ENCODE measurements at regions of chr17 and their contacts with region 1.

Region 1: GRCh38 chr17:58303971-58304725 is 23.4 kb upstream of the MPO start:
- DNase-seq: peak; percentile 66
- ATAC-seq: peak; percentile 99
- H3K4me3 Mint-ChIP-seq: no peak overlapping the region
- H3K27ac Mint-ChIP-seq: no peak overlapping the region
- H3K4me1 Mint-ChIP-seq: peaks cover 2% of the 10 kb centered on the region
- H3K27me3 Mint-ChIP-seq: no peaks in the 10 kb centered on the region
- CTCF ChIP-seq: peak; percentile 89

Region 2: GRCh38 chr17:58060596-58061191 is 243.5 kb before region 1 on chr17:
- CTCF ChIA-PET with region 1: no interaction called
- POLR2A ChIA-PET with region 1: no interaction called
- intact Hi-C with region 1: no loop called
- DNase-seq: no peak
- ATAC-seq: no peak
- H3K4me3 Mint-ChIP-seq: no peak overlapping the region
- H3K27ac Mint-ChIP-seq: no peak overlapping the region
- H3K4me1 Mint-ChIP-seq: no peaks in the 10 kb centered on the region
- H3K27me3 Mint-ChIP-seq: peaks cover 3% of the 10 kb centered on the region
- CTCF ChIP-seq: no peak

Region 3: DNA sequence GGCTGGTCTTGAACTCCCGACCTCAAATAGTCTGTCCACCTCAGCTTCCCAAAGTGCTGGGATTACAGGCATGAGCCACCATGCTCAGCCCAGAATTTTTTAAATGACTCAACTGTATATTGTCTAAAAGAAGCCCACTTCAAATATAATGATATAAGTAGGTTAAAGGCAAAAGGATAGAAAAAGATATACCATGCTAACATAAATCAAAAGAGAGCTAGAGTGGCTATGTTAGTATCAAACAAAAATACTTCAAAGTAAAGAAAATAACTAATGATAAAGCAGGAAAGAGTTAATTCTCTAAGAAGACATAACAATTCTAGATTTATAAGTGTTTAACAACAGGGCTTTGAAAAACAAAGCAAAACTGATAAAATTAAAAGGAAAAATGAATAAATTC is 10.1 kb before region 1 on chr17:
- CTCF ChIA-PET with region 1: interaction called, 15 read pairs
- POLR2A ChIA-PET with region 1: no interaction called
- intact Hi-C with region 1: no loop called
- DNase-seq: no peak
- ATAC-seq: no peak
- H3K4me3 Mint-ChIP-seq: no peak overlapping the region
- H3K27ac Mint-ChIP-seq: no peak overlapping the region
- H3K4me1 Mint-ChIP-seq: no peaks in the 10 kb centered on the region
- H3K27me3 Mint-ChIP-seq: peaks cover 5% of the 10 kb centered on the region
- CTCF ChIP-seq: no peak

Region 4: DNA sequence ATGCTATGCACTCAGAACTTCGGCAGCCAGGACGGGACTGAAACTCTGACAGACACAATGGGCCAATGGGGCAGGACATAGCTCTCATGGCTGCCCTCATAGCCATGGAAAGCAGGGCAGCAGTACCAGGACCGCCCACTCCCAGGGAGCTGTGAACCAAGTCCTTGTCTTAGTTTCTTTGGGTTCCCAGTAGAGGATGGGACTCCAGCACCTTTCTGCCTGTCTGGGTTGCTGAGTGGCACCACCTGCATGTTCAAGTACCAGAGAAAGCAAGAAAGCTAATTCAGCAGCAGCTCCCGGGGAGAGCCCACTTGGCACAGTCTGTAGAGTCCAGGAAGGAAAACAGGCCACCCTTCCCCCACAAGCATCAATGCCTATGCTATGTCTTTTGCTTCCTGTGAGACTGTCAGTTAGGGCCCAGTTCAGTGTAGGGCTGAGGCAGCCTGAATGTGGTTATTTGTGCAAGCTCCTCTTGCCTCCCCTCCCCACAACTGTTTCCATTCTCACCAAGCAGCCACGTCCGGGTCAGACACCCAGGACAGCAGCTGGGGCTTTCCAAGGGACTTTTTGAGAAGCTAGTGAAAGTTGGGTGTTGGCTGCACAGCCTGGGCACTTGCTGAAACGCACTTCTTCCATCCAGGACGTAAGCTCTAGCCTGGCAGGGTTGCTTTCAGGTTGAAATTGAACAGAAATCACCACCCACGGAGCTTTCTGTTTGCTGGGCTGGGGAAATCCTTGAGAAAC is 40.1 kb after region 1 on chr17:
- CTCF ChIA-PET with region 1: interaction called, 11 read pairs
- POLR2A ChIA-PET with region 1: interaction called, 7 read pairs
- intact Hi-C with region 1: no loop called
- DNase-seq: peak; percentile 98
- ATAC-seq: peak; percentile 78
- H3K4me3 Mint-ChIP-seq: peak overlapping the region; percentile 81
- H3K27ac Mint-ChIP-seq: peak overlapping the region; percentile 96
- H3K4me1 Mint-ChIP-seq: peaks cover 53% of the 10 kb centered on the region
- H3K27me3 Mint-ChIP-seq: no peaks in the 10 kb centered on the region
- CTCF ChIP-seq: no peak

Region 5: DNA sequence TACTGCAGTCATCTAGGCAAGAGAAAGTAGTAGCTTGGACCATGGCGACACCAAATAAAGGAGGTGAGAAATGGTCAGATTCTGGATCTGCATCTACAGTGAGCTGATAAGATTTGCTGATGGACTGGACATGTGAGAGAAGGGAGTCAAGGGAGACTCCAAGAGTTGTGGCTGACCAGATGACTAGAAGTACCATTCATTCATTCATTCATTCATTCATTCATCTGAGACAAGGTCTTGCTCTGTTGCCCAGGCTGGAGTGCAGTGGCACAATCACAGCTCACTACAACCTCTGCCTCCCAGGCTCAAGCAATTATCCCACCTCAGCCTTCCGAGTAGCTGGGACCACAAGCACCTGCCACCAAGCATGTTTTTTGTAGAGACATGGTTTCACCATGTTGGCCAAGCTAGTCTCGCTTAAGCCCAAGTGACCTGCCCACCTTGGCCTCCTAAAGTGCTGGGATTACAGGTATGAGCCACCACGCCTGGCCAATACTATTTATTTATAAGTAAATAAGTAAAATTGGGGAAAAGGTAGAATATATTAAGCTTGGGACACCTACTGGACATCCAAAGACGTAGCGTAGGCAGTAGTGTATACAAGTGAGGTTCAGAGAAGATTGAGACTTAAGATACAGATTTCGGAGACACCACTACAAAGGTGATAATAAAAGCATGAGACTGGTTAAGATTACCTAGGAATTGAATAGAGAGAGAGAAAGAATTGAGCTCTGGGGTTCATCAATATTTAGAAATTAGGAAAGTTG is 128.8 kb after region 1 on chr17:
- CTCF ChIA-PET with region 1: interaction called, 13 read pairs
- POLR2A ChIA-PET with region 1: no interaction called
- intact Hi-C with region 1: no loop called
- DNase-seq: no peak
- ATAC-seq: no peak
- H3K4me3 Mint-ChIP-seq: no peak overlapping the region
- H3K27ac Mint-ChIP-seq: no peak overlapping the region
- H3K4me1 Mint-ChIP-seq: no peaks in the 10 kb centered on the region
- H3K27me3 Mint-ChIP-seq: no peaks in the 10 kb centered on the region
- CTCF ChIP-seq: no peak

Region 6: DNA sequence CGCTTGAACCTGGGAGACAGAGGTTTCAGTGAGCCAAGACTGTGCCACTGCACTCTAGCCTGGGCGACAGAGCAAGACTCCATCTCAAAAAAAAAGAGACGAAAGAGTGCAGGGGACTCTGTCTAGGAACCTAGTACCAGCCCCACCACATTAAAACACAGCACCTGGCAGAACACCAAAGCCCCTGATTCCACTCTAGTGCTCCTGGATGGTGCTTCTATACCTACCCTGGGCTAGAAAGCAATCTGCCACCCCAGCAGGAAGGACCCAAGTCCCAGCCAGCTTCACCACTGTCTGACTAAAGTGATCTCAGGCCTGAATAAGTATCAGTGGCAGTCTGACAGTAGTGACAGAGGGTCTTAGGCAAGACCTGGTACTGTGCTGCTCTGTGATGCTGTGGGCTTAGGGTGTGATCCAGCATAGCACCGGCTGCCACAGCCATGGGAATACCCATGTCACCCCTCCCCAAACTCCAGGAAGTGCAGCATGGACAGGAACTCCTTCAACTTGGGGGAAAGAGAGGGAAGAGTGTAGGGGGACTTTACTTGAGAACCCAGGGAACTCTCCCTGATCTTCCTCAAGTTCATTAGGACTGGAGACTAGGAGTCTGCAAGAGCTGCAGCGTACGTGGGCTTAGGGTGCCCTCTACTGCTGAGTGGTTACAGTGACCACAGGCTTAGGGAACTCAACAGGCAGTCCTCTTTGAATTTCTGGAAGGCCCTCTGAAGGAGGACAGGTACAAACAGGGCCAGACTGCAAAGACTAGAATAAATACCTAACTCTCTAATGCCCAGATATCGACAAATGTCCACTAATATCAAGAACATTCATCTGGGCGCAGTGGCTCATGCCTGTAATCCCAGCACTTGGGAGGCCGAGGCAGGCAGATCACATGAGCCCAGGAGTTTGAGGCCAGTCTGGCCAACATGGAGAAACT is 143.2 kb after region 1 on chr17:
- CTCF ChIA-PET with region 1: interaction called, 10 read pairs
- POLR2A ChIA-PET with region 1: no interaction called
- intact Hi-C with region 1: loop called (anchors 5 kb)
- DNase-seq: peak; percentile 84
- ATAC-seq: peak; percentile 91
- H3K4me3 Mint-ChIP-seq: no peak overlapping the region
- H3K27ac Mint-ChIP-seq: no peak overlapping the region
- H3K4me1 Mint-ChIP-seq: peaks cover 3% of the 10 kb centered on the region
- H3K27me3 Mint-ChIP-seq: no peaks in the 10 kb centered on the region
- CTCF ChIP-seq: peak; percentile 68